Naive thymus-derived CD4-positive, alpha-beta T cell (primary cell): ENCODE measurements at regions of chr18 and their contacts with region 1.

Region 1: DNA sequence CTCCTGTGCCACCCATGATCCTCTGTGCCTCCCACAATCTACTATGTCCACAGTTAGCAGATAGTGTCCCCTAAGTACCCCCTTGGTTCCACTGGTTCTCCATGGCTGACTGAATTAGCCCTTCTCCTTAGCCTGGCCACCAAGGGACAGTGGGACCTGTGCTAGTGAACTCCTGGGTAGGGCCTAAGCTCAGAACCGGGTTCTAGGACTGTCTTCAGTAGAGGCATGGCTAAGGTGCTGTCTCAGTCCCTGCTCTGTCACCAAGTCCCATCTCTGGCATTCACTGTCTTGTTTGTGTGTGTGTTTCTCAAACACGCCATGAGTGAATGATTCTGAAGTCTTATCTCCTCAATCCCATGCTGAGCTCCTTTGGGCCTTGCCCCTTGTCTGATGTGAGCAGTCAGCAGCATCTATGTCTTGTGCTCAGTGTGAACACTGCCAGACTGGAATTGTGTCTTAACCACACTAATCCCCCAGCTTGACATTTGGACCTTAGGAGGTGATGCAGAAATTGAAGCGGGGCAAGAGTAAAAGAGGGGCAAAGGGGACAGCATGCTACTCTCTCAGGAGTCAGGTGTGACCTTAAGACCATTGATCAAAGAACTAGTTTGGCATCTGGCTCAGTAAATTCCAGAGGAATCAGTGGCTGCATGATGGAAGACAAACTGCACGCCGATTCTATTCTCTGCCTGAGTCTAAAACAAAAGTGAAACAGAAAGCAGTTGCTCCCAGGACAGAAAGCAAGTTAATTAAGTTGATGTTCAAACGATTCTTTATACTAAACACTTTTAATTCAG is 190.5 kb downstream of the ALPK2 start:
- DNase-seq: peak in 3 of 9 donors; percentile 3 to 29 (median 23)
- ATAC-seq: no peak
- H3K4me3 ChIP-seq: peak overlapping the region; percentile 48
- H3K4me3 Mint-ChIP-seq: peak overlapping the region; percentile 60 to 90 (median 80)
- H3K27ac ChIP-seq: no peak overlapping the region
- H3K27ac Mint-ChIP-seq: peak overlapping the region; percentile 1 to 91 (median 63)
- H3K4me1 ChIP-seq: peaks cover 0 to 16% of the 10 kb centered on the region in 2 donors
- H3K4me1 Mint-ChIP-seq: peaks cover 13 to 22% (median 17%) of the 10 kb centered on the region in 7 donors
- H3K27me3 ChIP-seq: no peaks in the 10 kb centered on the region
- H3K27me3 Mint-ChIP-seq: peaks cover 0 to 13% (median 0%) of the 10 kb centered on the region in 5 donors

Region 2: GRCh38 chr18:58400337-58400870 is 38.0 kb before region 1 on chr18:
- CTCF ChIA-PET with region 1: no interaction called
- POLR2A ChIA-PET with region 1: no interaction called
- intact Hi-C with region 1: loop called in 1 of 2 experiments (anchors 1 kb)
- DNase-seq: peak in 4 of 9 donors; percentile 10 to 26 (median 20)
- ATAC-seq: peak; percentile 44
- H3K4me3 ChIP-seq: no peak overlapping the region
- H3K4me3 Mint-ChIP-seq: peak overlapping the region in 9 of 10 donors; percentile 22 to 71 (median 60)
- H3K27ac ChIP-seq: no peak overlapping the region
- H3K27ac Mint-ChIP-seq: peak overlapping the region in 8 of 9 donors; percentile 41 to 88 (median 83)
- H3K4me1 ChIP-seq: peaks cover 0 to 3% of the 10 kb centered on the region in 2 donors
- H3K4me1 Mint-ChIP-seq: peaks cover 6 to 36% (median 30%) of the 10 kb centered on the region in 7 donors
- H3K27me3 ChIP-seq: no peaks in the 10 kb centered on the region
- H3K27me3 Mint-ChIP-seq: peaks cover 0 to 3% (median 0%) of the 10 kb centered on the region in 5 donors